ENCODE measurements at regions of chr2 and their contacts with region 1.

Region 1: GRCh38 chr2:188512456-188512855 is 220.8 kb downstream of the GULP1 start:
- DNase-seq: peak in 2 of 14 experiments; percentile 1 to 7
- ATAC-seq: no peak
- H3K4me3 ChIP-seq: no peak overlapping the region
- H3K4me3 Mint-ChIP-seq: no peak overlapping the region
- H3K27ac ChIP-seq: no peak overlapping the region
- H3K27ac Mint-ChIP-seq: no peak overlapping the region
- H3K4me1 ChIP-seq: no peaks in the 10 kb centered on the region
- H3K4me1 Mint-ChIP-seq: no peaks in the 10 kb centered on the region
- H3K27me3 ChIP-seq: no peaks in the 10 kb centered on the region
- H3K27me3 Mint-ChIP-seq: no peaks in the 10 kb centered on the region
- CTCF ChIP-seq: peak; percentile 16

Region 2: GRCh38 chr2:187574969-187575750 is 937.3 kb before region 1 on chr2:
- CTCF ChIA-PET with region 1: no interaction called
- POLR2A ChIA-PET with region 1: no interaction called
- intact Hi-C with region 1: loop called in 1 of 2 experiments (anchors 5 kb)
- DNase-seq: no peak
- ATAC-seq: no peak
- H3K4me3 ChIP-seq: no peak overlapping the region
- H3K4me3 Mint-ChIP-seq: no peak overlapping the region
- H3K27ac ChIP-seq: no peak overlapping the region
- H3K27ac Mint-ChIP-seq: no peak overlapping the region
- H3K4me1 ChIP-seq: no peaks in the 10 kb centered on the region
- H3K4me1 Mint-ChIP-seq: no peaks in the 10 kb centered on the region
- H3K27me3 ChIP-seq: no peaks in the 10 kb centered on the region
- H3K27me3 Mint-ChIP-seq: no peaks in the 10 kb centered on the region
- CTCF ChIP-seq: no peak

Measured in CD4-positive, alpha-beta T cell (primary cell).